ENCODE measurements at regions of chr4 and their contacts with region 1.

Region 1: GRCh38 chr4:120156120-120156718 is 89.6 kb upstream of the MAD2L1 start:
- DNase-seq: peak in 15 of 35 experiments; percentile 1 to 83 (median 22)
- ATAC-seq: peak in 1 of 4 experiments; percentile 47
- H3K4me3 ChIP-seq: no peak overlapping the region
- H3K4me3 Mint-ChIP-seq: no peak overlapping the region
- H3K27ac ChIP-seq: no peak overlapping the region
- H3K27ac Mint-ChIP-seq: no peak overlapping the region
- H3K4me1 ChIP-seq: no peaks in the 10 kb centered on the region
- H3K4me1 Mint-ChIP-seq: no peaks in the 10 kb centered on the region
- H3K27me3 ChIP-seq: no peaks in the 10 kb centered on the region
- H3K27me3 Mint-ChIP-seq: no peaks in the 10 kb centered on the region

Region 2: GRCh38 chr4:121307445-121308327 is 1151.5 kb after region 1 on chr4:
- CTCF ChIA-PET with region 1: interaction called, 5 to 12 read pairs
- POLR2A ChIA-PET with region 1: no interaction called
- DNase-seq: peak in 23 of 35 experiments; percentile 3 to 79 (median 21)
- ATAC-seq: peak in 1 of 4 experiments; percentile 45
- H3K4me3 ChIP-seq: no peak overlapping the region
- H3K4me3 Mint-ChIP-seq: no peak overlapping the region
- H3K27ac ChIP-seq: no peak overlapping the region
- H3K27ac Mint-ChIP-seq: peak overlapping the region in 1 of 2 donors; percentile 61
- H3K4me1 ChIP-seq: peaks cover 0 to 4% of the 10 kb centered on the region in 2 experiments
- H3K4me1 Mint-ChIP-seq: peaks cover 12 to 13% (median 13%) of the 10 kb centered on the region in 3 donors
- H3K27me3 ChIP-seq: no peaks in the 10 kb centered on the region
- H3K27me3 Mint-ChIP-seq: peaks cover 0 to 2% of the 10 kb centered on the region in 2 donors